ENCODE measurements at regions of chr13 and their contacts with region 1.

Region 1: GRCh38 chr13:26872525-26873385 is 112.2 kb upstream of the GPR12 start:
- DNase-seq: peak; percentile 43 to 92
- H3K4me3 ChIP-seq: no peak overlapping the region
- H3K27ac ChIP-seq: no peak overlapping the region
- H3K4me1 ChIP-seq: peaks cover 2 to 14% (median 5%) of the 10 kb centered on the region in 4 experiments; a peak in 4 of 7 replicates
- H3K27me3 ChIP-seq: 0 out of 7 replicates have a peak, but pooled peaks cover 0 to 2% (median 0%) of the 10 kb centered on the region in 4 experiments
- CTCF ChIP-seq: peak; percentile 88 to 96 (median 94)
- EP300 ChIP-seq: no peak
- POLR2A ChIP-seq: no peak
- RAD21 ChIP-seq: peak; percentile 91 to 96

Region 2: GRCh38 chr13:26473571-26474230 is 399.1 kb before region 1 on chr13:
- CTCF ChIA-PET with region 1: no interaction called
- POLR2A ChIA-PET with region 1: no interaction called
- DNase-seq: peak in 1 of 2 experiments; percentile 45
- H3K4me3 ChIP-seq: no peak overlapping the region
- H3K27ac ChIP-seq: no peak overlapping the region
- H3K4me1 ChIP-seq: peaks cover 5 to 20% (median 12%) of the 10 kb centered on the region in 4 experiments
- H3K27me3 ChIP-seq: no peaks in the 10 kb centered on the region
- CTCF ChIP-seq: no peak
- EP300 ChIP-seq: no peak
- POLR2A ChIP-seq: no peak
- RAD21 ChIP-seq: no peak

Region 3: DNA sequence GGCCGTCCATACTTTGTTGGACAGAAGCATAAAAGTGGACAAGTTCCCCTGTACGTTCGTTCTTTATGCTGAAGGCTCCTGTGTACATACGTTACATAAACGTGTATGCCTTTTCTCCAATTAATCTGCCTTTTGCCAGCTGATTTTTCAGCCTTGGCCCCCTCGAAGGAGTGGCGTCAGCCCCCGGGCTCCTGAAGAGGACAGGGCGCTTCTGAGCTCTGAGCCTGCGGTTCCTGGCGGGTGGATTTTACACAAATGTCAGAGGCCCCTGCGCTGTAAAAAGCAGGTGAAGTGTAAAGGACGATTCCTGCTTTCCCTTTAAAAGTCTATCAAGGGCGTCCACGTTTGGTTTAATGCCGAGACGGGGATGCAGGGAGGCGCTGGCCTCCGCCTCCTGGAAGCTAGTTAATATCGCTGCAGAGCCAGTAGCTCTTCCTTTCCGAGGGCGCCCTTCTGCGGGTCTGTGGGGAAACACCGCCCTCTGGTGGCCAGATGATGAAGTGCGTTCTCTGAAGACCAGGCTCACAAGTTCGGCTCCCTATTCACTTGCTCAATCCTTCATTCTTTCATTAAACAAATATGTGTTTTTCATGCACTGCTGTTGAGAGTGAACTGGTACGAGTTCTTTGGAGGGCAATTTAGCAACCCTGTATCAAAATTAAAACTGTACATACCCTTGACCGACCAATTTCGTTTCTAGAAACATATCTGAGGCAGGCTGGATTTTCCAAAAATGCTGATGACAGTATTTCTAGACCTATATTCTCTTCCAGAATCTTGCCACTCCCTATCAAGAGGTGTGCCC is 174.2 kb before region 1 on chr13:
- CTCF ChIA-PET with region 1: interaction called, 131 read pairs
- POLR2A ChIA-PET with region 1: no interaction called
- DNase-seq: peak; percentile 73 to 98
- H3K4me3 ChIP-seq: peak overlapping the region in 1 of 4 experiments; percentile 39; a peak in 2 of 8 replicates
- H3K27ac ChIP-seq: no peak overlapping the region
- H3K4me1 ChIP-seq: peaks cover 0 to 4% (median 1%) of the 10 kb centered on the region in 4 experiments; a peak in 1 of 7 replicates
- H3K27me3 ChIP-seq: no peaks in the 10 kb centered on the region
- CTCF ChIP-seq: peak; percentile 86 to 96 (median 95)
- EP300 ChIP-seq: no peak
- POLR2A ChIP-seq: no peak
- RAD21 ChIP-seq: peak; percentile 98 to 99

Region 4: GRCh38 chr13:26847281-26847680 is 25.5 kb before region 1 on chr13:
- CTCF ChIA-PET with region 1: interaction called, 15 read pairs
- POLR2A ChIA-PET with region 1: no interaction called
- DNase-seq: no peak
- H3K4me3 ChIP-seq: no peak overlapping the region
- H3K27ac ChIP-seq: 0 out of 2 replicates have a peak overlapping the region, but pooled peaks have one; percentile 40
- H3K4me1 ChIP-seq: peaks cover 0 to 6% (median 3%) of the 10 kb centered on the region in 4 experiments; a peak in 3 of 7 replicates
- H3K27me3 ChIP-seq: no peaks in the 10 kb centered on the region
- CTCF ChIP-seq: no peak
- EP300 ChIP-seq: no peak
- POLR2A ChIP-seq: no peak
- RAD21 ChIP-seq: no peak

Region 5: GRCh38 chr13:26861941-26862340 is 10.8 kb before region 1 on chr13:
- CTCF ChIA-PET with region 1: interaction called, 13 read pairs
- POLR2A ChIA-PET with region 1: no interaction called
- DNase-seq: no peak
- H3K4me3 ChIP-seq: no peak overlapping the region
- H3K27ac ChIP-seq: no peak overlapping the region
- H3K4me1 ChIP-seq: no peaks in the 10 kb centered on the region
- H3K27me3 ChIP-seq: no peaks in the 10 kb centered on the region; a peak in 1 of 7 replicates
- CTCF ChIP-seq: no peak
- EP300 ChIP-seq: no peak
- POLR2A ChIP-seq: no peak
- RAD21 ChIP-seq: no peak

Region 6: GRCh38 chr13:26896986-26897668 is 24.4 kb after region 1 on chr13:
- CTCF ChIA-PET with region 1: interaction called, 10 read pairs
- POLR2A ChIA-PET with region 1: no interaction called
- DNase-seq: no peak
- H3K4me3 ChIP-seq: no peak overlapping the region
- H3K27ac ChIP-seq: no peak overlapping the region
- H3K4me1 ChIP-seq: peaks cover 0 to 9% (median 0%) of the 10 kb centered on the region in 4 experiments; a peak in 2 of 7 replicates
- H3K27me3 ChIP-seq: 0 out of 7 replicates have a peak, but pooled peaks cover 0 to 3% (median 2%) of the 10 kb centered on the region in 4 experiments
- CTCF ChIP-seq: no peak
- EP300 ChIP-seq: no peak
- POLR2A ChIP-seq: no peak
- RAD21 ChIP-seq: no peak

Region 7: DNA sequence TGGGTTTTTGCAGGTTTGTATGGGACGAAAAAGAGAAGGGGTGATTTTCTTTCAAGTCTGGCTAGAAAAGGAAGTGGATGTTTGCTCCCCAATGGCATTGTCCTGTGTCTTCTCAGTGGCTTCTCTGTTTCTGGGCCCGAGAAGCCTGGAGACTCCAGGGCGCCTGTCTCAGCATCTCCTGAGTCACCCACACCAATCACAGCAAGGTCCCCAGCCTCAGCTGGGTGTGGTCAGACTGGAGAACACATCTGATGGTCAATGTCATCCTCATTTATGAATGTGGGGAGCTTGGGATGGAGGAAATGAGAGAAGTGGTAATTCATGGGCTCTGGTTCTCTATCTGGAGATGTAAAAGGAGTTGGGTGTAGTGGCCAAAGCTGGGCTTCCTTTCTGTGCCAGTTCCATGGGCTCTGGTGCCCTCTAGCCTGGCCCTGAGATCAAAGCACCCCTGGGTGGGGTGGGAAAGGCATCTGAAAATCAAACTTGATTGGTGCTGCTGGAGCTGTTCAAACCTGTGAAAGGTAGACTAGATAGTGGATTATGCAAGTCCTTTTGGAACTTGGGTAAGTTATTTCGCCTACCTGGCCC is 411.2 kb after region 1 on chr13:
- CTCF ChIA-PET with region 1: no interaction called
- POLR2A ChIA-PET with region 1: no interaction called
- DNase-seq: no peak
- H3K4me3 ChIP-seq: no peak overlapping the region
- H3K27ac ChIP-seq: no peak overlapping the region
- H3K4me1 ChIP-seq: no peaks in the 10 kb centered on the region
- H3K27me3 ChIP-seq: no peaks in the 10 kb centered on the region
- CTCF ChIP-seq: peak in 2 of 3 experiments; percentile 25 to 28; a peak in 2 of 4 replicates
- EP300 ChIP-seq: no peak
- POLR2A ChIP-seq: no peak
- RAD21 ChIP-seq: peak; percentile 65 to 69

Measured in H1 (cell line).